Activated CD4-positive, alpha-beta T cell treated with anti-CD3 and anti-CD28 coated beads for 36 hours (primary cell): ENCODE measurements at regions of chr9 and their contacts with region 1.

Region 1: DNA sequence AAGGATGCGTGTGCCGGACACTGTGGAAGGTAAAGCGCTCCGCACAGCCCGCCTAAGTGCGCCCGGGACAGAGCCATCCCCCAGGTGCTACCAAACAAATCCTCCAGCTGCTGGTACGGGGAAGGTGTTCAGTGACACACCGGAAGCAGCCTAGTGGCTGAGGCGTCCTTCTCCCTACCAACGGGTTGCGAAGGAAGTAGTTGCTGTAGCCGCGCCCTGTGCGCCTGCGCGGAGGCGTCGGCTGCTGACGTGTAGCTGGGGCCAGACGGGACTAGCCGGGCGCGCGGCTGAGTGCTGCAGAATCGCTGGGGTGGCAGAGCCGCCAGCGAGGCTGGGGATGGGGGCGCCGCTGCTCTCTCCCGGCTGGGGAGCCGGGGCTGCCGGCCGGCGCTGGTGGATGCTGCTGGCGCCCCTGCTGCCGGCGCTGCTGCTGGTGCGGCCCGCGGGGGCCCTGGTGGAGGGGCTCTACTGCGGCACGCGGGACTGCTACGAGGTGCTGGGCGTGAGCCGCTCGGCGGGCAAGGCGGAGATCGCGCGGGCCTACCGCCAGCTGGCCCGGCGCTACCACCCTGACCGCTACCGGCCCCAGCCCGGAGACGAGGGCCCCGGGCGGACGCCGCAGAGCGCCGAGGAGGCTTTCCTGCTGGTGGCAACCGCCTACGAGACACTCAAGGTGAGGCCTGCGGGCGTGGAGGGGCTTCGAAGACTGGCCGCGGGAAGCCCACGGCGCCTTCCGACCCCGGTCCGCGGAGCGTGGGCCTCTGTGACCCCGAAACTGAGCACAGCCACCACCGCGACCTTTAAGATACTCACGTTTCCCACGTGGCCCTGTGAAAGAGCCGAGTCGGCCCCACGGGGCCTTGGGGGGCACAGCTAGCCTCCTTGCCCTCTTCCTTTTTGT is at the start of gene DNAJC25:
- DNase-seq: peak; percentile 98
- ATAC-seq: peak; percentile 98
- H3K4me3 Mint-ChIP-seq: peak within 1 kb of the TSS; percentile 94
- H3K27ac Mint-ChIP-seq: peak within 1 kb of the TSS; percentile 91
- H3K4me1 Mint-ChIP-seq: peaks cover 47% of the 10 kb centered on the region
- H3K27me3 Mint-ChIP-seq: no peaks in the 10 kb centered on the region
- total RNA-seq, gene DNAJC25: 6.3 to 7.5 TPM

Region 2: DNA sequence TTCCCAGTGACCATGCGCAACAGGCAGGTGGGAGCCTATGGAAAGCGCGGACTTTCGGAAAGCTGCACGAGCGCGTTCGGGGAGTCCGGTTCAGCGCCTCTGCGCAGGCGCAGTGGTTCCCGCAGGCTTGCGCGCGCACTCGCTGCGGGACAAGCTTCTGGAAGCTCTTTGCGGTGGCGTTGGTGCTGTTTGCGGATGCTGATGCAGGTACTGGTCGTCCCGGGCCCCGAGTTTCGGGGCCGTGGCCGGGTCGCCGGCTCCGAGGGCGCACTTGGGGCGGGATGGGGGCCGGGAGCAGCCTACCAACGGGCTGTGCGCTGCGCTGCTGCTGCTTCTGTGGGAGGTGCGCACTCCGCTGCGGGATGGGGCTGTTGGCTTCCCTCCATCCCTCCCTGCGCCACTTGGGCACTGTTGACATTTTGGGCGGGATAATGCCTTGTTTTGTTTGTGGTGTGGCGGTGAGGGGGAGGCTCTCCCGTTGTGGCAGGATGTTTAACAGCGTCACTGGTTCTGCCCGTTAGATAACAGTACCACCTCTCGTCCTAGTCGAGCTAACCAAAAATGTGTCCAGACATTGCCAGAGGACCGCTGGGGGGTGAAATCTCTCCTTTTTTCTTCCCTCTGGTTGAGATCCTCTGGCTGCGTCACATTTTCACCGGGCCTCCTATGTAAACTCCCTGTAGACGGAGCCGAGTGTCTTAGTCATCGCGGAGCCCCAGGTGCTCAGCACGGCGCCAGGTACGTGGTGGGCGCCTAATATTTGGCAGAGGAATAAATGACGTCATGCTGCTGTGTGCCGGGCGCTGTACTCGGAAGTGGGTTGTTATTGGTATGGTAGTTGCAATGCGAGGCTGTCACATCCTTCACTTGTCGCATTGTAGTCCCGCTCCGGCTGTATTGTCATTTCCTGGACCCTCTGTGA is 106.0 kb before region 1 on chr9 and contains the start of gene ZNF483:
- CTCF ChIA-PET with region 1: interaction called, 3 read pairs
- POLR2A ChIA-PET with region 1: interaction called, 3 read pairs
- intact Hi-C with region 1: loop called in 1 of 2 experiments (anchors 5 kb)
- DNase-seq: peak; percentile 80
- ATAC-seq: peak; percentile 71
- H3K4me3 Mint-ChIP-seq: peak within 1 kb of the TSS; percentile 90
- H3K27ac Mint-ChIP-seq: peak within 1 kb of the TSS; percentile 87
- H3K4me1 Mint-ChIP-seq: peaks cover 25% of the 10 kb centered on the region
- H3K27me3 Mint-ChIP-seq: no peaks in the 10 kb centered on the region
- total RNA-seq, gene ZNF483: 2.5 to 3.0 TPM

Region 3: GRCh38 chr9:111661150-111661801 is 30.0 kb after region 1 on chr9 and contains the start of gene GNG10:
- CTCF ChIA-PET with region 1: interaction called, 4 read pairs
- POLR2A ChIA-PET with region 1: interaction called, 4 read pairs
- intact Hi-C with region 1: loop called (anchors 1 kb)
- DNase-seq: peak; percentile 81
- ATAC-seq: peak; percentile 92
- H3K4me3 Mint-ChIP-seq: peak within 1 kb of the TSS; percentile 98
- H3K27ac Mint-ChIP-seq: peak within 1 kb of the TSS; percentile 95
- H3K4me1 Mint-ChIP-seq: peaks cover 25% of the 10 kb centered on the region
- H3K27me3 Mint-ChIP-seq: no peaks in the 10 kb centered on the region
- total RNA-seq, gene GNG10: 14.5 to 15.4 TPM

Region 4: DNA sequence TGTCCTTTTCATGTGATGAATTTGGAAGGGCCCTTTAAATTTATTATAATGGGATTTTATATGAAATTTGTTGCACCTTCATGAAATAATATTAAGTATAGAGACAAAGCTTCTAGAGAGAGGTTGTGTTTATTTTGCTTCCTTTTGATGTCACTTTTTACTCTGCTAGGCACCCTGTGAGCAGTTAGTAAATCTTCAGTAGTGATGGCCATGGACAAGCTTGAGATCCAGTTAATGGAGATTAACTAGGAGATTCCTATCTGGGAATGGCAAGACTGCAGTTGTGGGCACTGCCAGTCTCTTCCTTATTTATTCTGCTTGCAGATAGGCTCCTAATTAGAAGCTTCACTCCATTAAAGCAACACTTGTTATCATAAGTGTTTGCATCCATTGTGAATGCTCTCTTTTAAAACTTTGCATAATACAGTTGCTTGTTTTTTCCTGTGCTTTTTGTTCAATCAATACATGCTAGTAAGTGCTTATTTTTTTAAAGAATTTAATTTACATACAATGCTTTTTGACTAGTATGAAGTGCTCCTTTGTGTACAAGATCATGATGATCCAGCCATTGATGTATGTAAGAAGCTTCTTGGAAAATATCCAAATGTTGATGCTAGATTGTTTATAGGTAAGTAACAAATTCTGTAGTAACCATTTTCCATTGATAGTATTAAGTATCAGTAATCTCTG is 291.1 kb after region 1 on chr9:
- CTCF ChIA-PET with region 1: no interaction called
- POLR2A ChIA-PET with region 1: no interaction called
- intact Hi-C with region 1: no loop called
- DNase-seq: no peak
- ATAC-seq: no peak
- H3K4me3 Mint-ChIP-seq: no peak overlapping the region
- H3K27ac Mint-ChIP-seq: peak overlapping the region; percentile 0
- H3K4me1 Mint-ChIP-seq: peaks cover 22% of the 10 kb centered on the region
- H3K27me3 Mint-ChIP-seq: no peaks in the 10 kb centered on the region

Region 5: DNA sequence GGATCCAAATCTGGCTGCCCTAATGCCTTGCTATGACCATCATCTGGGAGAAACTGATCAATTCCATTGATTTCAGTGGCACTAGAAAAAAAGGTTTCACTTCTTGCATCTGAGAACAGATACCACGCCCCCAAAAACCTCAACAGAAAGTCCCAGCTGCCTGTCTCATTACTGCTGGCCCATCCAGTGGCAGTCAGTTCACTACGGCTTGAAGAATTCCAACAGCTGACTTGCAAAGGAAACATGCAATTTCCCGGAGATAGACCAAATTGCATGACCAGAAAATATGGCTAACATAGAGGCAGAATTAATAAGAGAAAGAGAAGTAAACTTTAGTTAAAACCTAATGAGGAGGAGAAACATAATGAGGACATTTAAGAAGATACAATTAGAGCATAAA is 313.9 kb after region 1 on chr9:
- CTCF ChIA-PET with region 1: no interaction called
- POLR2A ChIA-PET with region 1: no interaction called
- intact Hi-C with region 1: no loop called
- DNase-seq: peak; percentile 54
- ATAC-seq: peak; percentile 77
- H3K4me3 Mint-ChIP-seq: no peak overlapping the region
- H3K27ac Mint-ChIP-seq: no peak overlapping the region
- H3K4me1 Mint-ChIP-seq: peaks cover 22% of the 10 kb centered on the region
- H3K27me3 Mint-ChIP-seq: peaks cover 4% of the 10 kb centered on the region